MCF 10A (cell line): ENCODE measurements at regions of chr17 and their contacts with region 1.

Region 1: DNA sequence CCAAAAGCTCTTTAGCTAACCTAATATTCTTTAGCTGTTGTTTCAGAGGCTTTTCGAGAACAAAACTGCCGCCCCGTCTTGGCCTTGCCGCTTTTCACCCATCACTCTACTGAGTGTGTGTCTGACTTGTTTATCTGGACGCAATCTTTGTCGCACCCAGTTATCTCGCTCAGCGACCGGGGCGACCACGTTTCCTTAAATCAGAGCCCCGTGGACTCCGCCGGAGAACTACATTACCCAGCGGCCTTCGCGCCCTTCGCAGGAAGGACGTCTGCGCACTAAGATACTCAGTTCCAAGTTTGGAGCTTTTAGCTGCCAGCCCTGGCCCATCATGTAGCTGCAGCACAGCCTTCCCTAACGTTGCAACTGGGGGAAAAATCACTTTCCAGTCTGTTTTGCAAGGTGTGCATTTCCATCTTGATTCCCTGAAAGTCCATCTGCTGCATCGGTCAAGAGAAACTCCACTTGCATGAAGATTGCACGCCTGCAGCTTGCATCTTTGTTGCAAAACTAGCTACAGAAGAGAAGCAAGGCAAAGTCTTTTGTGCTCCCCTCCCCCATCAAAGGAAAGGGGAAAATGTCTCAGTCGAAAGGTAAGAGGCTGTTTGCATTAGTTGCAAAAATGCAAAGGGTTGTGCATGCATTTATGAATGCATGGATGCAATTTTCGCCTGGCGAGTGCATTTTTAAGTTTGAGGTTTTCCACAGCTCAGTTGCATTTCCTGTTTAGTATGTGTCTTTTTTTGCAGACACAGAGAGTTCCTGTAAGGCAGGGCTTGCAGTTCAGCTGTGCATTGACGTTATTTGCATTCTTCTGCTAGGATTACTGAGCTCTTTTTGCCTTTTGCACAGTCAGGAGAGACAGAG is at the start of gene MAP2K6:
- DNase-seq: peak; percentile 64
- H3K4me3 Mint-ChIP-seq: no peak within 1 kb of the TSS
- H3K27ac Mint-ChIP-seq: no peak within 1 kb of the TSS
- H3K4me1 Mint-ChIP-seq: peaks cover 17% of the 10 kb centered on the region
- H3K27me3 Mint-ChIP-seq: no peaks in the 10 kb centered on the region
- CTCF ChIP-seq: no peak
- total RNA-seq, gene MAP2K6: 0.28 and 0.37 TPM in 2 replicates

Region 2: DNA sequence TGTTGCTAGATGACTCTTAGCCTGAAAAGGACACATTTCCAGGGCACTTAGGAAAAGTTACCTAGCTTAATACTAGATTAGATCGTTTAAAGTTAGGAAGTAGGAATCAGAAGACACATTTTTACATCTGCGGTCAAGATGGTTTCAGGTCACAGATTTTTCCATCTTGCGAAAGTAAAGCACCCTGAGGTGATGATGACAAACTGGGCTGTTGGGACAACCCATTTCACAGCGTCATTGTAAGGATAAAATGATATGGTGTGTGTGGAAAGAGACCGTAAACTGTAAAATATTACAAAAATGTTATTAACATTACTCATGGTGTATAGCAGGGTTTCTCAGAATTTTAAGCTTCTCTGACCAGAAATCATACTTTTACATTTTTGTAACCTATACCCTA is 10.3 kb before region 1 on chr17:
- CTCF ChIA-PET with region 1: no interaction called
- POLR2A ChIA-PET with region 1: interaction called, 18 read pairs
- intact Hi-C with region 1: no loop called
- DNase-seq: peak; percentile 75
- H3K4me3 Mint-ChIP-seq: no peak overlapping the region
- H3K27ac Mint-ChIP-seq: no peak overlapping the region
- H3K4me1 Mint-ChIP-seq: peaks cover 12% of the 10 kb centered on the region
- H3K27me3 Mint-ChIP-seq: no peaks in the 10 kb centered on the region
- CTCF ChIP-seq: no peak

Region 3: DNA sequence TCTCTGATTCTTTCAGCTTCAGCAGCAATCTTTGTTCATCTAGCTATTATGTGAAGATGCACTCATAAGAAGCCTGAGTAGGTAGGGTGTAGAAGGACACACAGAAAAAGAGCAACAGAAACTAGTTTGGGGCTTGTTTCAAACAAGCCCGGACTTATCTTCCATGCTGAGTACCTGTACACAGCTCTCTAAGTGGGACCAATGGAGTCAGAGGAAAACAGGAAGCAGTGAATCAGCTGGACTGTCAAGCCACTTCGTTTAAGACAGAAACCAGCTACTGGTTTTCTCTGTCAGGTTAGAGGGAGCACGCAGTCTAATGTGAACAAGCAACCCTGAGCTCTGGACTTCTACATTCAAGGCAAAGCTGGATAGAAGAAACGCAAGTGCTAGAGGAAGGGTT is 15.8 kb after region 1 on chr17:
- CTCF ChIA-PET with region 1: interaction called, 3 read pairs
- POLR2A ChIA-PET with region 1: interaction called, 33 read pairs
- intact Hi-C with region 1: no loop called
- DNase-seq: peak; percentile 60
- H3K4me3 Mint-ChIP-seq: peak overlapping the region; percentile 39
- H3K27ac Mint-ChIP-seq: peak overlapping the region; percentile 74
- H3K4me1 Mint-ChIP-seq: peaks cover 28% of the 10 kb centered on the region
- H3K27me3 Mint-ChIP-seq: no peaks in the 10 kb centered on the region
- CTCF ChIP-seq: no peak